ENCODE measurements at regions of chr20 and their contacts with region 1.

Region 1: GRCh38 chr20:35092524-35093266 is at the start of gene TRPC4AP:
- DNase-seq: peak; percentile 65
- H3K4me3 ChIP-seq: peak within 1 kb of the TSS; percentile 93
- H3K27ac ChIP-seq: peak within 1 kb of the TSS; percentile 88
- H3K27me3 ChIP-seq: no peaks in the 10 kb centered on the region
- CTCF ChIP-seq: peak; percentile 90
- polyA plus RNA-seq, gene TRPC4AP: 85.4 and 94.0 TPM in 2 replicates

Region 2: DNA sequence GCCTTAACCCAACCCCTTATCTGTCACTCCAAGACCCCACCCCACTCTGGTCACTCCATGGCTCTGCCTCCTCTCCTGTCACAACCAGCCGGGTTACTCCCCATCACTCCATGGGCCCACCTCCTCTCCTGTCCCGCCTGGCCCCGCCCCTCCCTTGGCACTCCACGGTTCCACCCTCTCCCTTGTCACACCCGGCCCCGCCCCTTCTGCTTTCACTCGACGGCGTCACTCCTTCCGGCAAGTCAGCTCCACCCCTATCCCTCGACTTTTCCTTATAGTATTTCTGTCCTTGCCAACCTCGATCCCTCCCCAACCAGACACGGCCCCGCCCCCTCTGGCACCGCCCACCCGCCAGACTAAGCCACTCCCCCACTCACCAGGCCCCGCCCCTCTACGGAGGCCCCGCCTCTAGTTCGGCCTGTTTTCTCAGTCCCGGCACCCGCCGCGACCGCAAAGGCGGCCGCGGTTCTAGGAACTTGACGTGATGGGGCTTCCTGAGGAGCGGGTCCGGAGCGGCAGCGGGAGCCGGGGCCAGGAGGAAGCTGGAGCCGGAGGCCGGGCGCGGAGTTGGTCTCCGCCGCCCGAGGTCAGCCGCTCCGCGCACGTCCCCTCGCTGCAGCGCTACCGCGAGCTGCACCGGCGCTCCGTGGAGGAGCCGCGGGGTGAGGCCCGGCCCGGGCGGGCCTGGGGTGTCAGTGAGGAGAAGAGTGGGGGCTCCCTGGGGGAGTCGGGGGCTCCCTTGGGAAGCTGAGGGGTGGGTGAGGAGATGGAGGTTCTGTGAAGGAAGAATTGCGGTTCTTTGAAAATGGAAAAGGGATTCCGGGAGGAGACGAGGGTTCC is 216.3 kb before region 1 on chr20 and contains the start of gene ACSS2:
- CTCF ChIA-PET with region 1: interaction called, 10 read pairs
- POLR2A ChIA-PET with region 1: interaction called, 6 read pairs
- DNase-seq: peak; percentile 95
- H3K4me3 ChIP-seq: peak within 1 kb of the TSS; percentile 77
- H3K27ac ChIP-seq: no peak within 1 kb of the TSS
- H3K27me3 ChIP-seq: no peaks in the 10 kb centered on the region
- CTCF ChIP-seq: no peak
- polyA plus RNA-seq, gene ACSS2: 37.3 and 43.6 TPM in 2 replicates

Region 3: DNA sequence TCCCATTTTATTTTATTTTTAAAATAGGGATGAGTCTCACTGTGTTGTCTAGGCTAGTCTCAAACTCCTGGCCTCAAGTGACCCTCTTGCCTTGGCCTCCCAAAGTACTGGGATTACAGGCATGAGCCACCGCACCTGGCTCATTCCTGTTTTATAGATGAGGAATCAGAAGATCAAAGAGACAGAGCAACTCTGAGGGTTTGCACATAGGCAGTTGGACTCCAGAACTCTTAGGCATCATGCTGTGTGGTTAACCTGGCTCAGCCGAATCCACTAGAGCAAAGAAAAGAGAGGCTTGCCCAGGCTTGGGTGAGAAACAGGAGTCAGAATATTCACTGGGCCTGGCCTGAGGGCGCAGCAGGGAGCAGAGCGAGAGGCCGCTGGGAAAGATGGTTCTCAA is 127.6 kb before region 1 on chr20:
- CTCF ChIA-PET with region 1: no interaction called
- POLR2A ChIA-PET with region 1: no interaction called
- DNase-seq: no peak
- H3K4me3 ChIP-seq: no peak overlapping the region
- H3K27ac ChIP-seq: no peak overlapping the region
- H3K27me3 ChIP-seq: no peaks in the 10 kb centered on the region
- CTCF ChIP-seq: no peak

Region 4: GRCh38 chr20:34982270-34983088 is 110.2 kb before region 1 on chr20:
- CTCF ChIA-PET with region 1: no interaction called
- POLR2A ChIA-PET with region 1: no interaction called
- DNase-seq: no peak
- H3K4me3 ChIP-seq: no peak overlapping the region
- H3K27ac ChIP-seq: no peak overlapping the region
- H3K27me3 ChIP-seq: peaks cover 16% of the 10 kb centered on the region
- CTCF ChIP-seq: no peak

Region 5: DNA sequence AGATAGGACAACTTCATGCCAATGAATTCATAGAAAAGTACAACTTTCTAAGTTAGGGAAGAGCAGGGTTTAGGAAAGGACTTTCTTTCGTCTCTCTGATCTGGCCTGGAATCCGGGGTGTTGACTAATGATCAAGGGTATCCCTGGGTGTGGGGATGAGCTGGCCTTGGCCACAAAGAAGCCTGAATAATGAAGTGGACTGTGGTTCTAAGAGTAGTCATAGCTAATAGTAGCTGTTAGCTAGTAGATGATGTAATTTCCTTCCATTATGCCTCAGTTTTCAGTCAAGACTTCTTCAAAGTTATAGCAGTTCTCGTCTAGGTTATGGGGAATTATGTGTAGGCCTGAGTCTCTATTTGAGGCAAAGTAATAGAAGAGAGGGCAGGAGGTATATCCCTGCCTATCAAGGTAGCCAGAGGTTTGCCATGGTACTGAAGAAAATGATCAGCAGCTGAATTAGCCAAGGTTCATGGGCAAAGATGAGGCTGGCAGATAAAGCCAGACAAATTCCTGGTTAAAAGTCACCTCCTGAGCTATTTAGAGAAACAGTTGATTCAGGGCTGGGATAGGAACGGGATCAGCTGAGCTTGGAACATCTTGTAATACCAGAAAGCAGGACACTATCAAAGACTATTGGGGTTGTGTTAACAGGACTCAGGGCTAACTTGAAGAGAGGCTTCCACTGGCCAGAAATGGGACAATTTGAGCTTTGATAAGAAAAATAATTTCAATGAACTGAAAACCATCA is 18.6 kb after region 1 on chr20:
- CTCF ChIA-PET with region 1: interaction called, 39 read pairs
- POLR2A ChIA-PET with region 1: interaction called, 3 read pairs
- DNase-seq: no peak
- H3K4me3 ChIP-seq: no peak overlapping the region
- H3K27ac ChIP-seq: peak overlapping the region; percentile 58
- H3K27me3 ChIP-seq: no peaks in the 10 kb centered on the region
- CTCF ChIP-seq: no peak

Region 6: GRCh38 chr20:35135867-35136586 is 43.3 kb after region 1 on chr20:
- CTCF ChIA-PET with region 1: interaction called, 12 read pairs
- POLR2A ChIA-PET with region 1: no interaction called
- DNase-seq: no peak
- H3K4me3 ChIP-seq: no peak overlapping the region
- H3K27ac ChIP-seq: no peak overlapping the region
- H3K27me3 ChIP-seq: no peaks in the 10 kb centered on the region
- CTCF ChIP-seq: no peak

Region 7: DNA sequence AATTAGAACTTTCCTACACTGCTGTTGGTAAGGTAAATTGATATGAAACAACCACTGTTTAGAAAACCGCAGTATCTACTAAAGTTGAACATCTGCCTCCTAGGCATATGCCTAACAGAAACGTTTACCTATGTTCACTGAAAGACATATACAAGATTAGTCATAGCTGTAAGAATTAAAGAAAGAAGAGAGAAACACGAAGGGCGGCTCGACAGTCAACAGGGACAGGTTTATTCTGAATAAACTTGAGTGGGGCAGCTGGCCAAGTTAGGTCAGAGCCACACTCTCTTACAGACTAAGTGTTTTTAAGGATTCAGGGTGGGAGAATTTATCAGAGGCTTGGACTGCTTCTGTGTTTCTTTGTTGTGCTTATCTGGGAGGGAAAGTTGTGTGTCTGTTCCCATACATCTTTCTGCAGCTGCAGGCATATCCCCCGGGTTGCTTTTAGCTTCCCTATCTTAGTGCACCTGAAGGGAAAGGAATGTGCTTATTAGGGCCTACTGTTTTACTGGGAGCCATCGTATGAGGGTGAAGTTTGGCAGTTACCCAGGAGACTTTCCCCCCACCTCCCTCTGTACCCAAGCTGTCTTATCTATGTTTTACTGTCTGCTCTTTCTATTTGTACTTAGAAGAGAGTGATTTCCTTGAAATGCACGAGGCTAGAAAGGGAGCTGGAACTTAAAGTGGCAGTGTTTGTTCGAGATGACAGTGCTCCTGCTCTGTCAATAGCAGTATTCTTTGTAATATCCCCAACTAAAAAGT is 99.6 kb after region 1 on chr20:
- CTCF ChIA-PET with region 1: interaction called, 14 read pairs
- POLR2A ChIA-PET with region 1: interaction called, 3 read pairs
- DNase-seq: no peak
- H3K4me3 ChIP-seq: no peak overlapping the region
- H3K27ac ChIP-seq: no peak overlapping the region
- H3K27me3 ChIP-seq: no peaks in the 10 kb centered on the region
- CTCF ChIP-seq: no peak

Region 8: DNA sequence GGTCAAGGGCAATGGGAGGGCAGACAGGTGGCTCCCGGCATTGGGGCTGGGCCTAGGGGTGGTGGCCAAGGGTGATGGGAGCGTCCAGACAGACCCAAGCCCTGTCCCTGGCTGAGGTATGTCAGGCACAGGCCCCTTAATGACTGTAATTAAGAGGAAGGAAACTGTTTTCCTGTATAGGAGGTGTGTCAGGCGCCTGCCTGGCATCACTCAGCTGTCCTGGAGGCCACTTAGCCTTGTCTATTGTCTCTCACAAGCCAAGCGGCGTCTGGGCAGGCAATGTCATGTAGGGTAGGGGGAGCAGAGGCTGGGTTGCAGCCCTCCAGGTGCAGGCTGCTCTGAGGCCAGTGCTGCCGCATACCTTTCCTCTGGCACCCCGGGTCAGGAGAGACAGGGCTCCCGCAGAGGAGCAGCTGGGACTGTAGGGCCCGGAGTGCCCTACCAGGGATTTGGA is 203.4 kb after region 1 on chr20:
- CTCF ChIA-PET with region 1: no interaction called
- POLR2A ChIA-PET with region 1: no interaction called
- DNase-seq: no peak
- H3K4me3 ChIP-seq: no peak overlapping the region
- H3K27ac ChIP-seq: no peak overlapping the region
- H3K27me3 ChIP-seq: no peaks in the 10 kb centered on the region
- CTCF ChIP-seq: no peak

Region 9: DNA sequence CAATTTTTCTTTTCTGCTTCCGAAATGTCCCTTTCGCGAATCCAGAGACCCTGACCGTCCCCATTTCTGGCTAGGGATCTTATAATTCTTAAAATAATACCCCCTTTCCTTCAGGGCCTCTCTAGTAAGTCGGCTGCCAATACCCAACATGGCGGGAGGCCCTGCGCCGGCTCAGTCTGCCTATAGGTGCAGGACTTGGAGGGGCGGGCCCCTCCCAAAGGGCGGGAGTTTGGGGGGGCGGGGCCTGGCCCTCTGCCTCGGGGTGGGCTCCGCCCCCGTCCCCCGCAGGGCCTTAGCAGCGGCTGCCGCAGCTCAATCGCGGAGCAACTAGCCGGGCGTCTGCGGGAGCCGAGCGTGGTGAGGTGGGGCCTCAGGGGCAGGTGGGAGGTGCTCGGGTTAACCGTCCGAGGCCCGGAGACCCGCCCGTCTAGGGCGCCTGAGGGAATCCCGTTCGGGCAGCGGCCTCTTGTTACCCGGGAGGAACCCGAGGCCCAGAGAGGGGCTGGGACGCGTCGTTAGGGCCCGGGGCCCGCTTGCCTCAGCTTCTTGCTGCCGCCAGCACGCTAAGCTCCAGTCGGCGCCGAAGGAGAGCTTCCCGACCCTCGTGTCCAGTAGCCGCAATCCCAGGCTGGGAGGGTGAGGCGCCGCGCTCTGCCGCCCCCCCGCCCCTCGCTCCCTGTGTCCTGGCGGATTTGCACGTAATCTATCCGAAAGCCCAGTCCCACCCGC is 362.4 kb after region 1 on chr20 and contains the start of gene CEP250:
- CTCF ChIA-PET with region 1: interaction called, 10 read pairs
- POLR2A ChIA-PET with region 1: interaction called, 3 read pairs
- DNase-seq: peak; percentile 81
- H3K4me3 ChIP-seq: peak within 1 kb of the TSS; percentile 91
- H3K27ac ChIP-seq: peak within 1 kb of the TSS; percentile 95
- H3K27me3 ChIP-seq: no peaks in the 10 kb centered on the region
- CTCF ChIP-seq: no peak
- polyA plus RNA-seq, gene CEP250: 16.8 and 21.3 TPM in 2 replicates